Head of caudate nucleus (tissue), 42 donors: ENCODE measurements at regions of chr14 and their contacts with region 1.

Region 1: GRCh38 chr14:91649930-91650329 is 82.0 kb downstream of the CATSPERB start:
- DNase-seq: peak in 12 of 42 donors; percentile 4 to 68 (median 15)

Region 2: GRCh38 chr14:91911474-91912032 is 261.6 kb after region 1 on chr14:
- intact Hi-C with region 1: loop called (anchors 5 kb)
- DNase-seq: peak in 20 of 42 donors; percentile 23 to 67 (median 49)